ENCODE measurements at regions of chr6 and their contacts with region 1.

Region 1: DNA sequence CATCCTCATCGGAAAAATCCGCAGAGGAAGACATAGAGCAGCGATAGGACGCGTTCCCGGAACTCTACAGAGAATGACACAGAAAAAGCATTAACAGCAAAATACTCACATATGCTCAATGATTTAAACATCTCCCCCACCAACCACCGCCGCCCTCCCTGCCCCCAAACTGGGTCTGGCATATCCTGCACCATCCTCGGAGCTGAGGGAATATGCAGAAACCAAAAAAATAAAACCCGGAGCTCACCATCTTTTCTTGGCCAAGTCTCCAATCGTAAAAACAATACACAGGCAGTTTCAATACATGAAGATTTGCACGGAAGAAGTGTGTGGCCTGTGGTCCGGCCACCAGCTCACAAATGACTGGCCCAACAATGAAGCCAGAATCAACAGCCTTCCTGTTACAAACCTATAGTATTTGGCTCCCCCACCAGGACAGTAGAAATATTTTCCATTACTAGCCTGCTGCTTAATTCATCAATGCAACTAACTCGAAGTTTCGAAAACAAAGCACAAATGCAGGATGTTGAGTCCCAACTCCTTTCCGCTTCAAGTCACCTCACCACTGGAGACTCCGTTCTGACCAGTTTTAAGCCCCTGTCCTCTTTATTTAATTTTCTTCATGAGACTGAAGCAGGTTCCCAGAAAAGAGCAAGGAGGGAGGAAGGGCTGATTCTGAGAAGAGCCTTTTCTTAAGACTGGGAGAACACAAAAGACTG is 103.2 kb upstream of the BEND6 start:
- DNase-seq: peak; percentile 57
- H3K4me3 ChIP-seq: peak overlapping the region; percentile 69
- H3K27ac ChIP-seq: peak overlapping the region; percentile 74
- H3K27me3 ChIP-seq: no peaks in the 10 kb centered on the region
- CTCF ChIP-seq: peak; percentile 69

Region 2: DNA sequence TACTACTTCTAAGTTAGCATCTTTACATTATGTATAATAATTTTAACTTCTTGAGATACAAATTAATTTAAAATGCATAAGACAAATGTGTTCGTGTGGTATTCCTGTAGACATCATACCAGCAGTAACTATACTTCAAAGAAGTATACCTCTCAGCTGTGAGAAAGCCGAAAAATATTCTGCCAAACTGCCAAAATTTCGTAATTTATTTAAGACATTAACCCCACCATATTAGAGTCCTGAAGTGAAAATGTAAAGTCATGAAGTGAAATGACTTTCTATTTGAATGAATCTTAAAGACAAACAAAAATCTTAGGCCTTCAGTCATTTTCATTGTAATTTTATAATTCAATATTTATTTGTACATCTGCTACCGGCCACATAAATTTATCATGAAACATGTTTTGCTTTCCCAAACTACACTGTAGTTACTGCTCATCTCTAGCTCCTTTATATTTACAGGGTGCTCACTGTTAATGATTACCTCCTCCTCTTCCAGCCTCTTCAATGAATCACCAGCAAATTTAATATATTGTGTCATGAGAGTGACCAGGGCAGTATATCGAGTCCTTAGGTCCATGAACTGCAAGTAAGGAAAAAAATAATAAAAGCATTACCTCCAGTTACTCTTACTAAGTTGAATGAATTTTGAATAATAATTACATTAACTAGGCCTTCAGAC is 227.5 kb before region 1 on chr6:
- CTCF ChIA-PET with region 1: interaction called, 11 read pairs
- POLR2A ChIA-PET with region 1: no interaction called
- DNase-seq: no peak
- H3K4me3 ChIP-seq: no peak overlapping the region
- H3K27ac ChIP-seq: no peak overlapping the region
- H3K27me3 ChIP-seq: no peaks in the 10 kb centered on the region
- CTCF ChIP-seq: no peak

Region 3: DNA sequence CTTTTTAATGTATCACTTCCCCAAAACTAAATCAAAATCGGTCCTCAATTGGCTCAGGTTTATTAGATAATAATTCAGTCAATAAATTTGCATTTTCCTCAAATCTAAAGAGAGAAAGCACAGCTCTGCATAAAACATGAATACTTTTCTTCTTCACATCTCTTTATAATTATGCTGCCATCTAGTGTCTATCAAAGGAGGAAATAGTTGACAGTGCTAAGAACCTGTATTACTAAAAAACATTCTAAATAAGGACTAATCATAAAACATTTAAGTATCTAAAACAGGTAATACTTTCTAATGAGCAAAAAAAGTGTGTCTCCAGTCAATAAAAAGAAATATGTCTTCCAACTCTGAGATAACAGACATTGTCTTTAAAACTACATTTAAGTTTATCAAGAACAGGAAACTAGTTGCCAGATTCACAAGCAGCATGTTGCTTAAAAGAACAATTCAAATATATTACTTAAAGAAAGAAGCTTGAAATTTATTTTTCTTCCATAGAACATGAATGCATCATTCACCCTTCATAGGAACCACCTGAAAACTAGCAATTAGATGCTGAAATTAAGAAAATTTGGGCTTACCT is 152.5 kb before region 1 on chr6:
- CTCF ChIA-PET with region 1: interaction called, 17 read pairs
- POLR2A ChIA-PET with region 1: no interaction called
- DNase-seq: no peak
- H3K4me3 ChIP-seq: no peak overlapping the region
- H3K27ac ChIP-seq: no peak overlapping the region
- H3K27me3 ChIP-seq: no peaks in the 10 kb centered on the region
- CTCF ChIP-seq: peak; percentile 52

Region 4: GRCh38 chr6:56708810-56709597 is 142.7 kb before region 1 on chr6:
- CTCF ChIA-PET with region 1: interaction called, 56 read pairs
- POLR2A ChIA-PET with region 1: interaction called, 3 read pairs
- DNase-seq: no peak
- H3K4me3 ChIP-seq: no peak overlapping the region
- H3K27ac ChIP-seq: no peak overlapping the region
- H3K27me3 ChIP-seq: no peaks in the 10 kb centered on the region
- CTCF ChIP-seq: peak; percentile 55

Region 5: DNA sequence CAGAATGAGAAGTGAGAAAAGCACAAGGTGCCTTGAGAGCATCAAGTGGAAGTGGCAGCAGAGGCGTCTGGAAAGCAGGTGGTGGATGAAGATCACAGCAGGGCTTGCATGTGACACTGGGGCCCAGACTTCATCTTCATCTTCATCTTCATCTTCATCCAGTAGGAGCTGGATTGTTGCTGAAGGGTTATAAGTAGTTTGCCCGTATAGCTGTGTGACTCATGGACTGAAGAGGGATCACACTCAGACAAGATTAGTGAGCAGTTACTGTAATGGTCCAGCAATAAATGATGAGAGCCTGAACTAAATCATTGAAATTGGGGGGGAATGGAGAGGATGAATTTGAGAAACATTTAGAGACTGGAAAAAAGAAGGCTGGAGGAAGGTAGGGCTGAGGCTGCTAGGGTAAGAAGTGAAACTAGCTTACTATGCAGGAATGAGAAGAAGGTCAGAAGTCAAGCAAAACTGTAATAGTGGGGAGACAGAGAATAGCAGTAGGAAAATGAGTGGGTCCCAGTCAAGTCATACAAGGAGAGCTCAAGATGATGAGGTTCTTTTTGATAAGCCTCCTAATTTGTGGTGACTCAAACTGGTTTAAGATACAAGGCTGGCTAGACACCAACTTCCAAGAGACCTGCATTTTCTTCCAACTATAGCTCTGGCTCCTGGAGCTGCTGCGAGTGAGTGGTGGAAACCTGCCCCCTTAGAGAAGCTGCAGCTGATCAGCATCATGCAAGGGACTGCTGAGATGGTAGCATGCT is 10.9 kb after region 1 on chr6:
- CTCF ChIA-PET with region 1: interaction called, 78 read pairs
- POLR2A ChIA-PET with region 1: interaction called, 6 read pairs
- DNase-seq: no peak
- H3K4me3 ChIP-seq: no peak overlapping the region
- H3K27ac ChIP-seq: peak overlapping the region; percentile 59
- H3K27me3 ChIP-seq: no peaks in the 10 kb centered on the region
- CTCF ChIP-seq: no peak